ENCODE measurements at regions of chr16 and their contacts with region 1.

Region 1: GRCh38 chr16:88442727-88443576 is 10.1 kb upstream of the ZFPM1 start:
- DNase-seq: peak; percentile 55 to 66 (median 55)
- H3K4me3 ChIP-seq: no peak overlapping the region
- H3K4me3 Mint-ChIP-seq: no peak overlapping the region
- H3K27ac ChIP-seq: no peak overlapping the region
- H3K27ac Mint-ChIP-seq: no peak overlapping the region
- H3K4me1 ChIP-seq: peaks cover under 1 to 1% of the 10 kb centered on the region in 2 donors
- H3K4me1 Mint-ChIP-seq: peaks cover 3% of the 10 kb centered on the region
- H3K27me3 ChIP-seq: no peaks in the 10 kb centered on the region
- H3K27me3 Mint-ChIP-seq: peaks cover 5 to 20% (median 10%) of the 10 kb centered on the region in 3 donors
- CTCF ChIP-seq: peak; percentile 92

Region 2: DNA sequence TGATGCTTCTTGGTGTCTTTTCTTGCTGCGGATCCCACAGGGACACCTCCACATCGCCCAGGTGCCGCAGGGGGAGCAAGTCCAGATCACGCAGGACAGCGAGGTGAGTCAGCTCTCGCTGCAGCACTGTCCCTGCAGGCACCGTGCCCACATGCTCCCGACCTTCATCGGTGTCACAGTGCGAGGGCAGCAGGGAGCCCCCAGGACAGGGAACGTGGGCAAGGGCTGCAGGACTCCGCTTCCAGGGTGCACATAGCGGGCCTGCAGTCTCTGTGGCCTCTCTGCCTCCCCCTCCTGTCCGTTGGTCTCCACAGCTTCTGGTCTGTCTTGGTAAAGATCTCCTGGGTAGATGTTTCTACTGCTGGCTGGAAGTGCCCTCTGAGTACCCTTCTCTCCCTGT is 407.7 kb before region 1 on chr16:
- intact Hi-C with region 1: no loop called
- DNase-seq: no peak
- H3K4me3 ChIP-seq: no peak overlapping the region
- H3K4me3 Mint-ChIP-seq: no peak overlapping the region
- H3K27ac ChIP-seq: no peak overlapping the region
- H3K27ac Mint-ChIP-seq: peak overlapping the region in 2 of 7 donors; percentile 35
- H3K4me1 ChIP-seq: no peaks in the 10 kb centered on the region
- H3K4me1 Mint-ChIP-seq: no peaks in the 10 kb centered on the region
- H3K27me3 ChIP-seq: no peaks in the 10 kb centered on the region
- H3K27me3 Mint-ChIP-seq: peaks cover 0 to 3% (median 2%) of the 10 kb centered on the region in 3 donors
- CTCF ChIP-seq: no peak

Region 3: GRCh38 chr16:88527186-88527936 is 84.4 kb after region 1 on chr16:
- intact Hi-C with region 1: loop called (anchors 1 to 5 kb)
- DNase-seq: peak; percentile 21 to 47 (median 28)
- H3K4me3 ChIP-seq: no peak overlapping the region
- H3K4me3 Mint-ChIP-seq: no peak overlapping the region
- H3K27ac ChIP-seq: no peak overlapping the region
- H3K27ac Mint-ChIP-seq: no peak overlapping the region
- H3K4me1 ChIP-seq: no peaks in the 10 kb centered on the region
- H3K4me1 Mint-ChIP-seq: no peaks in the 10 kb centered on the region
- H3K27me3 ChIP-seq: peaks cover 0 to 28% of the 10 kb centered on the region in 2 donors
- H3K27me3 Mint-ChIP-seq: peaks cover 20 to 43% (median 25%) of the 10 kb centered on the region in 3 donors
- CTCF ChIP-seq: peak; percentile 87

Region 4: GRCh38 chr16:88561485-88562369 is 118.8 kb after region 1 on chr16:
- intact Hi-C with region 1: loop called (anchors 5 kb)
- DNase-seq: peak; percentile 19 to 50 (median 46)
- H3K4me3 ChIP-seq: no peak overlapping the region
- H3K4me3 Mint-ChIP-seq: no peak overlapping the region
- H3K27ac ChIP-seq: no peak overlapping the region
- H3K27ac Mint-ChIP-seq: no peak overlapping the region
- H3K4me1 ChIP-seq: no peaks in the 10 kb centered on the region
- H3K4me1 Mint-ChIP-seq: peaks cover 6% of the 10 kb centered on the region
- H3K27me3 ChIP-seq: no peaks in the 10 kb centered on the region
- H3K27me3 Mint-ChIP-seq: peaks cover 8 to 15% (median 12%) of the 10 kb centered on the region in 3 donors
- CTCF ChIP-seq: peak; percentile 65